H1 (cell line): ENCODE measurements at regions of chr7 and their contacts with region 1.

Region 1: GRCh38 chr7:97835296-97836138 is 36.7 kb downstream of the ASNS start:
- DNase-seq: peak in 1 of 2 experiments; percentile 83
- H3K4me3 ChIP-seq: no peak overlapping the region
- H3K27ac ChIP-seq: no peak overlapping the region
- H3K4me1 ChIP-seq: no peaks in the 10 kb centered on the region
- H3K27me3 ChIP-seq: no peaks in the 10 kb centered on the region
- CTCF ChIP-seq: peak in 2 of 3 experiments; percentile 58 to 59; a peak in 3 of 4 replicates
- EP300 ChIP-seq: no peak
- POLR2A ChIP-seq: no peak
- RAD21 ChIP-seq: peak; percentile 82 to 84

Region 2: DNA sequence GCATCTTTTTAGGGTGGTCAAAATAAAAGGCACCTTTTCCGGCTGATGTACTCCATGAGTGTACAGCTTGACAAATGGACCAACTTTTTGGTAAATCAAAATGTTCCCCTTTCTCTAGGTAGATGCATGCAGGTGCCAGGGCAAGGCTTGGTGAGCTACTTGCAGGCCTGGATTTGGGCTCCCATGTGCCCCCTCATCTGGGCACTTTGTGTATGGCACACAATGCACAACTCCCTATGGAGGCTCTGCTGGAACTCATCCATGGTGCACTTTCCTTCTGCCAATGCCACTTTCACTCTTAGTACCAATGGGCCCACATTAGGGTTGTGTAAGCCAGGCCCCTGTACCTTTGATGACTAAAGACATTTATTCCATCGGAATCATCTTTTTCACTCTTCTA is 417.2 kb before region 1 on chr7:
- CTCF ChIA-PET with region 1: interaction called, 11 read pairs
- POLR2A ChIA-PET with region 1: no interaction called
- DNase-seq: peak in 1 of 2 experiments; percentile 51
- H3K4me3 ChIP-seq: no peak overlapping the region
- H3K27ac ChIP-seq: no peak overlapping the region
- H3K4me1 ChIP-seq: no peaks in the 10 kb centered on the region
- H3K27me3 ChIP-seq: no peaks in the 10 kb centered on the region
- CTCF ChIP-seq: peak; percentile 40 to 63 (median 41)
- EP300 ChIP-seq: no peak
- POLR2A ChIP-seq: no peak
- RAD21 ChIP-seq: peak; percentile 48 to 59

Region 3: DNA sequence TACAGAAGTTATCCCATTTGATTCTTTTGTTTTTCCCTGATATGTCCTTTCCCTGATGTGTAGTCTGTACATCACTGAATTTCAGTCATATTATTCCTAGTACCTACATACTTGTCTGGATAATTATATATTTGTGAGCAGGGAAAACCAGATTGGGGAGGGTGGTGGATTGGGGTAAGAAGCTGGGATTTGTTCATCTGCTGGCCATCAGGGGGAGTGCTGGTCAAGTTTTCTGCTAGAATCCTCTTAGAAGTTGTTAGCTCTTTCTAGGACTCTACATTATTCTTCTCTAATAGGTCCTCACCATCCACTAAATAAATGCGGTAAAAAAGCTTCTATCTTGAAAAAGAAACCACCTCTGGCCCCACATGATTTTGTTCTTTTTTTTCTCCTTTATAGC is 336.3 kb before region 1 on chr7:
- CTCF ChIA-PET with region 1: interaction called, 13 read pairs
- POLR2A ChIA-PET with region 1: no interaction called
- DNase-seq: peak; percentile 27 to 54
- H3K4me3 ChIP-seq: no peak overlapping the region
- H3K27ac ChIP-seq: no peak overlapping the region
- H3K4me1 ChIP-seq: no peaks in the 10 kb centered on the region
- H3K27me3 ChIP-seq: no peaks in the 10 kb centered on the region
- CTCF ChIP-seq: peak; percentile 46 to 67 (median 61)
- EP300 ChIP-seq: no peak
- POLR2A ChIP-seq: no peak
- RAD21 ChIP-seq: peak; percentile 74 to 81

Region 4: DNA sequence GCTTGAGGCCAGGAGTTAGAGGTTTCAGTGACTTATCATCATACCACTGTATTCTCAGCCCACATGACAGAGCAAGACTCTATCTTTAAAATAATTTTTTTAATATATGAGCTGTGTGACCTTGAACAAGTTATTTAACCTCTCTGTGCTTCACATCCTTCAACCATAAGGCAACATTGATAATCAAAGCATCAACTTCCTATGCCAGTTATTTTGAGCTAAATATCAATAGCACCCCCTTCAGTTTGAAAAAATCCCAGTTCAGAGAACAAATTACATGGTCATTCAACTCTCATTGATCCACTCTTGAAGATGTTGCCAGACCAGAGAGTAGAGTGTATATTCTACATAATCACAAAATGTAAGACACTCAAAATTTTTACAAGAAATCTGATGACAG is 16.4 kb before region 1 on chr7:
- CTCF ChIA-PET with region 1: interaction called, 33 read pairs
- POLR2A ChIA-PET with region 1: no interaction called
- DNase-seq: no peak
- H3K4me3 ChIP-seq: no peak overlapping the region
- H3K27ac ChIP-seq: no peak overlapping the region
- H3K4me1 ChIP-seq: no peaks in the 10 kb centered on the region
- H3K27me3 ChIP-seq: no peaks in the 10 kb centered on the region
- CTCF ChIP-seq: peak in 2 of 3 experiments; percentile 25 to 39; a peak in 2 of 4 replicates
- EP300 ChIP-seq: no peak
- POLR2A ChIP-seq: no peak
- RAD21 ChIP-seq: peak; percentile 68 to 71

Region 5: DNA sequence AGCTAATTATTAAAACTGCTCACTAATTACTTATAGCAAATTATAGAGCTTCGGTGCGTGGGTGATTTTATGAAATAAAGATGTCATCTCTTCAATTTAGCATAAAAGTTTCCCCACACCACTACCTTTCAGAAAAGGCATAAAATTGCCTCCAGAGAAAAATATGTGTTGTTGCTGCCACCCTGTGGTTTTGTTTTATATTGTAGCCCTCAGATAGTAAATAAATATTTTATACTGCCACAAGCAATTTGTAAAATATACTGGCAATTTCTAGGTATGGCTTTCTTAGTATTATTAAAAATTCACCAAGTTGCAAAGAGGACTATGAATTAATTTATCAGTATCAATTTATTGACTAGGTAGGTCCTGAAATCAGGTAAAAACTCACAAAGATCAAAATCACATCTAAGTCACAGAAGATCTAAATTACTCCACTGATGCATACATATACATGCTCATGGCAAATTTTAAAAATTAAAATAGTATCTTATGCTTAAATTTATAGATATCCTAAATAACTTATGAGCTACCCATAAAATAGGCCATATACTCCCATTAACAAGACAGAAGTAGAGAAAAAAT is 10.2 kb after region 1 on chr7:
- CTCF ChIA-PET with region 1: interaction called, 24 read pairs
- POLR2A ChIA-PET with region 1: no interaction called
- DNase-seq: no peak
- H3K4me3 ChIP-seq: no peak overlapping the region
- H3K27ac ChIP-seq: no peak overlapping the region
- H3K4me1 ChIP-seq: no peaks in the 10 kb centered on the region
- H3K27me3 ChIP-seq: no peaks in the 10 kb centered on the region
- CTCF ChIP-seq: peak in 2 of 3 experiments; percentile 4 to 18; a peak in 2 of 4 replicates
- EP300 ChIP-seq: no peak
- POLR2A ChIP-seq: no peak
- RAD21 ChIP-seq: peak; percentile 59 to 64

Region 6: GRCh38 chr7:97857544-97857943 is 22.0 kb after region 1 on chr7:
- CTCF ChIA-PET with region 1: interaction called, 10 read pairs
- POLR2A ChIA-PET with region 1: no interaction called
- DNase-seq: no peak
- H3K4me3 ChIP-seq: no peak overlapping the region
- H3K27ac ChIP-seq: no peak overlapping the region
- H3K4me1 ChIP-seq: no peaks in the 10 kb centered on the region
- H3K27me3 ChIP-seq: no peaks in the 10 kb centered on the region
- CTCF ChIP-seq: no peak
- EP300 ChIP-seq: no peak
- POLR2A ChIP-seq: no peak
- RAD21 ChIP-seq: no peak